ENCODE measurements at regions of chr9 and their contacts with region 1.

Region 1: DNA sequence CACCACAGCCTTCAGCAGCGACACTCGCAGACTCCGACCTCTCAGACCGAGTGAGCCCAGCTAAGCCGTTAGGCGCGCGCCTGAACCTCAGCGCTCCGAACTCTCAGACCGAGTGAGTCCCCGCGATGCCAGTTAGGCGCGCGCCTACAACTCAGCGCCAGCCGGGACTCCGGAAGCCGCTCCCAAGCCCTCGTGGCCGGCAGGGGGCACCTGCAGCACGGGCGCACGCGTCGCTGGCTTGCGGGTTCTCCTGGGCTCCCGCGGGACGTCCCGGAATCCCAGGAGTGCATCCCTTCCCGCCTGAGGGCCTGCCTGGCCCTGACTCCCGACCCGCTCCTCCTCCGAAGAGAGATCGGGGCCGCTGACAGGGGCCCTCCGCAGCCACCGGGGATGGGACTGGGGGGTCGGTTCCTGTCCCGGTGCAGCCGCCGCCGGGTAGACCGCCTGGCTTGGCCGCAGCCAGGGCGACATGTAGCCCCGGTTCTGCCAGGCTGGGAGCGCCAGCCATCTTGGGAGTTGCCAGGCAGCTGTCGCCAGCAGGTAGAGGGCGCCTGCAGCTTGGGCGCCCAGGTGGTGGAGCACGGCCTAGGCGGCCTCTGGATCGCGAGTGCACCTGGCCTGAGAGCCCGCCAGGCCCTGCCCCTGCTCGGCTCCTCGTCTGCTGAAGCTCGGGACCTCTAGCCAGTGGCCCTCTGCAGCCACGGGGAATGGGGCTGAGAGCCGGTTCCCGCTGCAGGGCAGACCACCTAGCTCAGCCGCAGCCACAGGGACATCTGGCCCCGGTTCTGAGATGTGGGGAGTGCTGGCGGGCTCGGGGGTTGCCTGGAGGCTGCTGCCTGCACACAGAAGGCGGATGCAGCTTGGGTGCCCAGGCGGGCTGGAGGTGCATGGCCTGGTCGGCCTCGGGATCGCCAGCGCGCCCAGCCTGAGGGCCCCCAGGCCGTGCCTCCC is at the start of gene ANKRD18A:
- DNase-seq: peak; percentile 83
- ATAC-seq: peak; percentile 91
- H3K4me3 ChIP-seq: peak within 1 kb of the TSS; percentile 74 to 82
- H3K27ac ChIP-seq: peak within 1 kb of the TSS; percentile 81
- H3K4me1 ChIP-seq: peaks cover 2 to 14% of the 10 kb centered on the region in 2 experiments; a peak in 2 of 4 replicates
- H3K27me3 ChIP-seq: no peaks in the 10 kb centered on the region
- CTCF ChIP-seq: peak; percentile 60 to 75 (median 74)
- POLR2A ChIP-seq: peak; percentile 41
- RAD21 ChIP-seq: peak; percentile 66
- total RNA-seq, gene ANKRD18A: 24.2 TPM

Region 2: DNA sequence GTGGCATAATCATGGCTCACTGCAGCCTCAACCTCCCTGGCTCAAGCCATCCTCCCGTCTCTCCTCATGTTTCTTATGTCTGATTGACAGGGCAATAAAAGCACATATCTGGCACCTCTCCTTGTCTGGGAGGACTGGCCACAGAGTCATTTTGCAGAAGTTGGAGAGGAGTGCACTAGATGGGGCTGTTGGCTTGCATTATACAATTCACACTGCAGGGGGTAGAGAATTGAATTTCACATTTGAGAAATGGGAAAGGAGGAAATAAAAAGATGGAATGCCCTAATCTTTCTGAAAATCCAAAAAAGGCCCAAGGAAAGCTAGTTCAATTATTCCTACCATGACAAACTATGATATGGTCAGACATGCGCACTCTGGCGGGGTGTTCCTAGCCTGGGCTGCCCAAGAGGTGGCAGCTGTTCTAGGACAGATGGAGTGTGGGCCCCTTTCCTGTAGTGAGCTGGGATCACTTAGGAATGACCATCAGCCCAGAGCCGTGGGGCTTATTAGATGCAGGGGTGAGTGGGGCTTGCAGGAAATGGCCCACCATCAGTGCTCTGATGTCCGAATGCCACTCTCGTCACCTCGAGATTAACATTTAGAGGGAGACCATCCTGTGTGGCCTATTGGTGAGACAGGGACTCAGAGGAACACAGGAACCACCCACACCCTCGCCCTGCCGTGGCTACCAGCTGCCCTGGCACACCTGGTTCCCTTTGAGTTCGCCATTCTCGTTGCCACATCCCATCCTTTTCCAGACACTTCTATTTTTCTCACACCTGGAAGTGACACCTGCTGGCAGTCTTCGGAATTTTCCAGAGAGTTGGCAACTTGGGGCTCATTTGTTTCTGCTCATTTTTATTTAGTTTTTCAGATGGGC is 21.5 kb after region 1 on chr9:
- CTCF ChIA-PET with region 1: interaction called, 19 read pairs
- POLR2A ChIA-PET with region 1: interaction called, 4 read pairs
- RAD21 ChIA-PET with region 1: no interaction called
- intact Hi-C with region 1: no loop called
- DNase-seq: peak; percentile 59
- ATAC-seq: peak; percentile 85
- H3K4me3 ChIP-seq: no peak overlapping the region
- H3K27ac ChIP-seq: no peak overlapping the region
- H3K4me1 ChIP-seq: peaks cover 2 to 22% of the 10 kb centered on the region in 2 experiments; a peak in 3 of 4 replicates
- H3K27me3 ChIP-seq: no peaks in the 10 kb centered on the region
- CTCF ChIP-seq: peak; percentile 55 to 87 (median 74)
- POLR2A ChIP-seq: no peak
- RAD21 ChIP-seq: peak; percentile 92

Region 3: GRCh38 chr9:38671748-38672147 is 51.0 kb after region 1 on chr9:
- CTCF ChIA-PET with region 1: interaction called, 4 read pairs
- POLR2A ChIA-PET with region 1: no interaction called
- RAD21 ChIA-PET with region 1: no interaction called
- intact Hi-C with region 1: loop called (anchors 5 kb)
- DNase-seq: no peak
- ATAC-seq: no peak
- H3K4me3 ChIP-seq: peak overlapping the region in 1 of 2 experiments; percentile 48; a peak in 1 of 4 replicates
- H3K27ac ChIP-seq: no peak overlapping the region
- H3K4me1 ChIP-seq: peaks cover 17 to 21% of the 10 kb centered on the region in 2 experiments
- H3K27me3 ChIP-seq: no peaks in the 10 kb centered on the region; the same call in 1 of the 2 replicates
- CTCF ChIP-seq: no peak
- POLR2A ChIP-seq: no peak
- RAD21 ChIP-seq: no peak